ENCODE measurements at regions of chr4 and their contacts with region 1.

Region 1: DNA sequence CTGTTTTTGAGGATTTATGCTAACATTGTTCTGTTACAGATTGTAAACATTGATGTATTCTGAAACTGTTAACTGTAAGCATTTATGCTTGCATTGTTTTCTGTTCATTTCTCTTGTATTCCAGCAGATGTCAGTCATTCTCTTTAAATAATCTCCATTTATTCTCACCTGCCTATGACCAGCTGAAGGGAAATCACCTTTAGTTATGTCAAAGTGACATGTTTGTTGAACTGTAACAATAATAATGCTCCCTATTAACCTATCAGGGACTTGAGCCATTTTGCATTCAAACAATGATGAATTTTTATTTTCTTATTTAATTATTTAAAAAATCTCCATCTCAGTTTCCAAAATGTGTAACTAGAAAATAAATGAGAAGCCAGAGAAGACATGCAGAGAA is 58.0 kb downstream of the SPCS3 start:
- DNase-seq: peak; percentile 21
- H3K4me3 ChIP-seq: no peak overlapping the region
- H3K27ac ChIP-seq: no peak overlapping the region
- H3K4me1 ChIP-seq: no peaks in the 10 kb centered on the region
- CTCF ChIP-seq: peak; percentile 81

Region 2: DNA sequence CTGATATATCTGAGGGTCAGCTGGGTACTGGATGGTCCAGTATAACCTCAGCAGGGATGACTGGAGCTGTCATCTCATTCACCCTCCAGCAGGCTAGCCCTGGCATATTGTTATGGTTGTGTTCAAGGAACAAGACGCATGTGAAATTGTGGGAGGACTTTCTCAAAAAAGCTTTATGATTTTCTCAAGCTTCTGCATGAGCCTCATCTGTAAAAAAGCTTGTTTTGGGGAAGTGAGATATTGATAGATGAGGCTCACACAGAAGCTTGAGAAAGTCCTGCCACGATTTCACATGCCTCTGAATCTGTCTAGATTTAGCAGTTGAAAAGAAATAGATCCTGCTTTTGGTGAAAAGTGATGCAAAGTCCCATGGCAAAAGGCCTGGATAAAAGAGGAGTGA is 35.4 kb after region 1 on chr4:
- CTCF ChIA-PET with region 1: no interaction called
- POLR2A ChIA-PET with region 1: no interaction called
- intact Hi-C with region 1: no loop called
- DNase-seq: no peak
- H3K4me3 ChIP-seq: no peak overlapping the region
- H3K27ac ChIP-seq: no peak overlapping the region
- H3K4me1 ChIP-seq: no peaks in the 10 kb centered on the region
- CTCF ChIP-seq: no peak

Region 3: DNA sequence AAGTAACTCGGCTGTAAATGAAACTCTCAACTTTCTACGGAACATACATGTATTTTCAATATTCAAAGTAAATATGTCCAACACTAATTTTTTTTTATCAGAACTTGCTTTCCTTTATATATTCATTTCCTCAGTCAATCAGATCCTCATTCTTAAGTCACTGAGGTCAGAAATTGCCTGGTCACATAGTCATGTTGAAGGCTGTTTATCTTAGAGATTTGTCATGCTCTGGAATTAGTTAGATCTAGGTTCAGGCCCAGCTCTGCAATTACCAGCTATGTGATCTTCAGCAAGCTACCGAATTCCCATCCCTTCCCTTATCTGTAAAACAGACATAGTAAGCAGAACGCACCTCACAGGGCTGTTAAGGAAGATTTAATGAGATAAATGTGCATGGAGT is 170.8 kb after region 1 on chr4:
- CTCF ChIA-PET with region 1: no interaction called
- POLR2A ChIA-PET with region 1: no interaction called
- intact Hi-C with region 1: no loop called
- DNase-seq: no peak
- H3K4me3 ChIP-seq: no peak overlapping the region
- H3K27ac ChIP-seq: no peak overlapping the region
- H3K4me1 ChIP-seq: no peaks in the 10 kb centered on the region
- CTCF ChIP-seq: no peak

Region 4: GRCh38 chr4:176789955-176790354 is 412.2 kb after region 1 on chr4:
- CTCF ChIA-PET with region 1: no interaction called
- POLR2A ChIA-PET with region 1: no interaction called
- intact Hi-C with region 1: loop called (anchors 10 kb)
- DNase-seq: peak; percentile 17
- H3K4me3 ChIP-seq: no peak overlapping the region
- H3K27ac ChIP-seq: no peak overlapping the region
- H3K4me1 ChIP-seq: no peaks in the 10 kb centered on the region
- CTCF ChIP-seq: peak; percentile 76